ENCODE measurements at regions of chr15 and their contacts with region 1.

Region 1: GRCh38 chr15:40440743-40441564 is at the start of gene BAHD1:
- DNase-seq: peak; percentile 95
- H3K4me3 ChIP-seq: peak within 1 kb of the TSS; percentile 84 to 92
- H3K27ac ChIP-seq: peak within 1 kb of the TSS; percentile 68 to 69
- H3K4me1 ChIP-seq: peaks cover 5% of the 10 kb centered on the region
- H3K27me3 ChIP-seq: no peaks in the 10 kb centered on the region
- CTCF ChIP-seq: no peak
- POLR2A ChIP-seq: peak; percentile 54
- total RNA-seq, gene BAHD1: 17.0 to 39.4 TPM

Region 2: DNA sequence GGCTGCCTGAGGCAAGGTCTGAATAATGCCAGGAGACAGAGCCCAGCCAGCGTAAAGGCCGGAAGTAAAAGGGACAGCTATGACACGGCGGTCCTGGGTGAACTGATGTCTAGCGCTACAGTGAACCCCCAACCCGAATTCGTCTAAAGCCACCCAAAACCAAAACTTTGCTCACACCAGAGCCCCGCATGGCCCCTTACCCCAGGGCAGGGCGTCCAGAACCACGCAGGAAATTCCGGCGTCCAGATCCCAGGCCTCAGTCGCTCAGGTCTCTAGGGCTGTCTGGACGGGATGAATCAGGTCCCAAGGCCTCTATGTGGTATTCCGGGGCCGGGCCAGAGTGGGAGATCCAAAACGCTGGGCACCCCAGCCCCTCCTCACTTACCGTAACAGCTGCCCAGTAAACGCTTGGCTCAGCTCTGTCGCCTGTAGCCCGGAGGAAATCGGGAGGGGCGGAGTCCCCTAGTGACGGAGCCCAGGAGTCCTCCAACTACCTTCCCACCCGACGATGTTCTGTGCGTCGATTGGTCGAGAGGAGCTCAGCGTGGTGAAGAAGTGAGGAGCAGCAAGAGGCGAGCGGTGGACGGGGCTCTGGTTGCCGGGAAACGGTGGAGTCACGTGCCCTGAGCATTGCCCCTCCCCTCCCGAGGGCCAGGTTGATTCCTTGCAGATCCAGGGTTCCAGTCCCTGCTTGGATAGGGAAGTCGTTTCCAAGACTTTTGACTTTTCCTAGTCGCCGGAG is 123.8 kb after region 1 on chr15 and contains the start of gene CCDC32:
- intact Hi-C with region 1: loop called (anchors 5 kb)
- DNase-seq: peak; percentile 99
- H3K4me3 ChIP-seq: peak within 1 kb of the TSS; percentile 66 to 91
- H3K27ac ChIP-seq: peak within 1 kb of the TSS; percentile 88 to 96
- H3K4me1 ChIP-seq: peaks cover 7% of the 10 kb centered on the region
- H3K27me3 ChIP-seq: no peaks in the 10 kb centered on the region
- CTCF ChIP-seq: peak in 1 of 4 experiments; percentile 15
- POLR2A ChIP-seq: peak; percentile 91
- total RNA-seq, gene CCDC32: 17.5 to 27.5 TPM